Esophagus muscularis mucosa (tissue), 4 donors: ENCODE measurements at regions of chr16 and their contacts with region 1.

Region 1: DNA sequence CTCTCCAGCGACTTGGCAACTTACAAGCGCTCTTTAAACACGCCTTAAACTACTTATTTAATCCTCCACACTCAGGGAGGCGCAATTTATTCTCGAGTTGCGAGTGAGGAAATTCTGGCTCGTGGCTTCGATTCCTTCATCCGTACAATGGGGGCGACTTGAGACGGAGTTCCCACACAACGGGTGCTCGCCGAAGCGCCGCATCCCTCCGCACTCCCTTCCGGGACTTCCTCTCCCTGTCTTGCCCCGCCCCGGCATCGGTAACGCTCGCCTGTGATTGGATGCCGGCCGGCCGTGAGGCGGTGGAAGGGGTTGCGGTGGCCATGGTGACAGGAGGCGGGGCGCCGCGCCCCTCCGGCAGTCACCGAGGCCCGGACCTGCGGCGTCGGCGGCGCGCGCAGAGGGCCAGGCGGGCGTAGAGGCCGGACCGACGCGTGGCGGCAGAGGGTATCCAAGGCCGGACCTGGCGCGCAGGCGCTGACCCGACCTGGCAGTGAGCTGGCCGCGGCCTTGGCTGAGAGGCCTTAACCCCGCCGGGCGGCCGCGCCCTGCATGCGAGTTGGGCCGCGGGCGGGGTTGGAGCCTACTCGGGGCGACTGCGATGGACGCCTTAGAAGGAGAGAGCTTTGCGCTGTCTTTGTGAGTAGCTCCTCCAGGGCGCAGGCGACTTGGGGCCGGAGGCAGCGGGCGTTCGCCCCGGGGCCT is at the start of gene ARL2BP:
- DNase-seq: peak; percentile 99
- H3K4me3 ChIP-seq: peak within 1 kb of the TSS; percentile 80 to 90 (median 82)
- H3K27ac ChIP-seq: peak within 1 kb of the TSS; percentile 92 to 95 (median 94)
- H3K4me1 ChIP-seq: peaks cover 13 to 23% (median 21%) of the 10 kb centered on the region in 4 donors
- H3K27me3 ChIP-seq: no peaks in the 10 kb centered on the region
- CTCF ChIP-seq: peak in 1 of 3 experiments; percentile 7
- EP300 ChIP-seq: no peak
- POLR2A ChIP-seq: no peak
- total RNA-seq, gene ARL2BP: 58.1 to 77.4 (median 66.9) TPM

Region 2: GRCh38 chr16:57185944-57186871 is 58.7 kb before region 1 on chr16 and contains the starts of genes PSME3IP1 and RSPRY1:
- intact Hi-C with region 1: loop called (anchors 5 kb)
- DNase-seq: peak; percentile 100
- H3K4me3 ChIP-seq: peak within 1 kb of the TSS; percentile 86 to 99 (median 94)
- H3K27ac ChIP-seq: peak within 1 kb of the TSS; percentile 96 to 98 (median 97)
- H3K4me1 ChIP-seq: peaks cover 27 to 55% (median 42%) of the 10 kb centered on the region in 4 donors
- H3K27me3 ChIP-seq: no peaks in the 10 kb centered on the region
- CTCF ChIP-seq: no peak
- EP300 ChIP-seq: no peak
- POLR2A ChIP-seq: peak; percentile 34
- total RNA-seq, gene PSME3IP1: 47.8 to 60.7 (median 57.5) TPM
- total RNA-seq, gene RSPRY1: 22.4 to 30.7 (median 25.7) TPM